Activated T-helper 1 cell treated with anti-CD3 and anti-CD28 coated beads, Interleukin-12 subunit alpha, Interleukin-12 subunit beta, Interleukin-2, Interleukin-4 antibody, amounts not matched to agents 30 ng/mL and 10 ng/mL and 1 ng/mL, durations not matched to agents 14 hours and 24 hours and 36 hours (primary cell): ENCODE measurements at regions of chr6 and their contacts with region 1.

Region 1: GRCh38 chr6:118893807-118894424 is at the start of gene ASF1A:
- DNase-seq: peak; percentile 95
- H3K4me3 Mint-ChIP-seq: peak within 1 kb of the TSS; percentile 94
- H3K27ac Mint-ChIP-seq: peak within 1 kb of the TSS; percentile 96
- H3K4me1 Mint-ChIP-seq: peaks cover 49% of the 10 kb centered on the region
- H3K27me3 Mint-ChIP-seq: no peaks in the 10 kb centered on the region
- total RNA-seq, gene ASF1A: 36.0 and 42.9 TPM in 2 replicates

Region 2: GRCh38 chr6:118283766-118284165 is 610.1 kb before region 1 on chr6:
- intact Hi-C with region 1: loop called (anchors 1 kb)
- DNase-seq: peak; percentile 7
- H3K4me3 Mint-ChIP-seq: no peak overlapping the region
- H3K27ac Mint-ChIP-seq: no peak overlapping the region
- H3K4me1 Mint-ChIP-seq: no peaks in the 10 kb centered on the region
- H3K27me3 Mint-ChIP-seq: peaks cover 18% of the 10 kb centered on the region

Region 3: DNA sequence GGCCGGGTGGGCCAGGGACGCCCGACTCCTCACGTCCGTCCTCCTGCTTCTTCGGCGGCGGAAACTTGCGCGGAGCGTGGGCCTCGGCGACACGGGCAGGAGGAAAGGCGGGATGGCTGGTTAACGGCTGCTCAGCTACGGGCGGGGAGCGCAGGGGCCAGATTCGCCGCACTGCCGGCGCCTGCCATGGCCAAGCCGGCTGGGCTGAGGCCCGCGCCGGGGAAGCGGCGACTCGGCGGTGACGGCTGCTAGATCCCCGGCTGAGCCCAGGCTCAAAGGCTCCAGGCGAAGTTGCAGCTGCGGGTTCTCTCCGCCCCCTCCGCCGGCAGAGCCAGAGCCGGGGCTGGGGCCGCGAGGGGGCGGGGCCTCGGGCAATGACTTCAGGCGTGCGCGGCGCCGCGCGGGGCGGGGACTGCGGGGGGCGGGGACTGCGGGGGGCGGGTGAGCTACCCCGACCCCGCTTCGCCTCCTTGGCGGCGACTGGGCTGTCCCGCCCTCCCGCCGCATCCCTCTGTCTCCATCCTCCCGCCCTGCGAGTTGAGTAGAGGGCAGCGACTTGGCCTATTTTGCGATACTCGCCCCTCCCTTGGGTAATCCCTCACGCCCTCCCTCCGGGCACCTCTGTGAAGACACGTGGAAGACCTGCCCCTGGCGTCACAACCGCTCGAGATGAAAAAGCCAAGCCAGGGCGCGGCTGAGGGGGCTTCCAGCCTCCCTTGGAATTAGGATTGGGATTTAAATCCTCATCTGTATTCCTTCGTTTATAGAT is 242.4 kb before region 1 on chr6 and contains the start of gene CEP85L:
- intact Hi-C with region 1: loop called (anchors 1 kb)
- DNase-seq: peak; percentile 86
- H3K4me3 Mint-ChIP-seq: peak within 1 kb of the TSS; percentile 85
- H3K27ac Mint-ChIP-seq: peak within 1 kb of the TSS; percentile 92
- H3K4me1 Mint-ChIP-seq: peaks cover 52% of the 10 kb centered on the region
- H3K27me3 Mint-ChIP-seq: no peaks in the 10 kb centered on the region
- total RNA-seq, gene CEP85L: 50.9 and 51.4 TPM in 2 replicates

Region 4: GRCh38 chr6:118761645-118762044 is 132.3 kb before region 1 on chr6:
- intact Hi-C with region 1: no loop called
- DNase-seq: no peak
- H3K4me3 Mint-ChIP-seq: no peak overlapping the region
- H3K27ac Mint-ChIP-seq: no peak overlapping the region
- H3K4me1 Mint-ChIP-seq: peaks cover 2% of the 10 kb centered on the region
- H3K27me3 Mint-ChIP-seq: peaks cover 3% of the 10 kb centered on the region

Region 5: DNA sequence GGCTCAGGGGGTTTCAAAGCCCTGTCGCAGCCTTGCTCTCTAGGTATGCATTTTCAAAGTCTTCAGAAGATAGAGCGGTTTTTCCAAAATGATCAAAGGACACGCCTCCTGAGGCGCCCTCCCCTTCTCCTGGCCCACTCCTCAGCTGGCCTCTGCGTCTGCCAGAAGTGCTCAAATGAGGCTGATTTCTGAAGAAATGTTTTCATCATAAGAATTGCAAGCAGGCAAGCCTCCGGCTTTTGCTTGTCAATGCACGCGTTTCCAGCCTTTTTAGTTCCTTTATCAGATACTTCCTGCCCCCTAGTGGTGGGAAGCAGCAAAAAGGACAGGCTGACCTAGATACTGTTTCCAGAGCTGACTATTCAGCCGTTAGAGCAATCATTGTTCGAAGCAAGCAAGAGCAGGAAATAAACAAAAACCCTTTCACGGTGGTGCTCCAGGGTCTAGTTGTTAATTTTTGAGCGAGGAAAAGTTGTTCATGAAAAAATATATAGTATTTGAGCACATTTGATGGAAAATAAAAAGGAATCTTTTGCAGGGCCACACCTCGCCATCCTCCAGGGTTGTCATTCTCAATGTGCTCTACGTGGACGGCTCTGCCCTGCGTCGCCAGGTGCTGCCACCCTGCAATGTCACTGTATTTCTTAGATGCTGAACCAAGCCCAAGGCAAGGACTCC is 93.4 kb before region 1 on chr6:
- intact Hi-C with region 1: loop called (anchors 1 kb)
- DNase-seq: peak; percentile 79
- H3K4me3 Mint-ChIP-seq: peak overlapping the region; percentile 17
- H3K27ac Mint-ChIP-seq: peak overlapping the region; percentile 15
- H3K4me1 Mint-ChIP-seq: peaks cover 35% of the 10 kb centered on the region
- H3K27me3 Mint-ChIP-seq: no peaks in the 10 kb centered on the region

Region 6: DNA sequence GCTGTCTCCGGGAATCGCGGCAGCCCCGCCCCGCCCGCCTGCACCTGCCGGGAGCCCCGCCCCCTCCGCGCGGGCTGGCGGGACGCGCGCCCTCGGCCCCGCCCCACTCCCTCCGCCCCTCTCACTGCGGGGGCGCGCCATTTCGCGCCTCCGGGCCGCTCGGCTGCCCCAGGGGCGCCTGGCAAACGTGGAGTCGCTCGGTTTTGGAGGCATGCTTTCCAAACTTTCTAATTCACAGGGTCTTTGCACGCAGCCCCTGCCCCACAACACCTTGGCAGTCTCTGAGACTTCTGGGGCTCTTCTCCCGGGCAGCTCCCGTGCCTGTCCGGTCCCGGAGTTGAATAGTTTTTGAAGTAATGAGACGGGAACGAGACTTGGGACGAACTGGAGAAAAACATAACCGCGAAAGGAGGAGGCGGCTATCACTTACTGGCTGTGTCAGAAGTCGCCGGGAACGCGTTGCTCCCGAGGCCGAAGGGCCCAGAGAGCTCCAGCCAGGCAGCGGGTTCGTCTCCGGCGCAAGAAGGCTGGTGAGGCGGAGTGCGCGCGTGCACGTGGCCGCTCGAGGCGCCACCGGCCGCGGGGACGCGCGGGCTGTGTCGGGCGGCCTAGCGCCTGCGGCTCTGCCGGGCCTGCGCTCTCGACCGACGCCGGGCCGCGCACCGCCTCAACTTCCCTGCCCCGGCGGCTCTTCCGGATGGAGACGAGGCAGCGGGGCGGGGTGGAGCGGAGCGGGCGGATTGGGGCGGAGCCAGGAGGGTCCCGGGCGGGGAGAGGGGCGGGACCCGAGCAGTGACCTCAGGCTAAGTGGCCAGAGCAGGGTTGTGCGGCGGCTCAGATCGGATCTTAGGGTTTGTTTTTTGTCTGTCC is 40.8 kb after region 1 on chr6 and contains the start of gene MCM9:
- intact Hi-C with region 1: loop called (anchors 1 kb)
- DNase-seq: peak; percentile 86
- H3K4me3 Mint-ChIP-seq: peak within 1 kb of the TSS; percentile 91
- H3K27ac Mint-ChIP-seq: peak within 1 kb of the TSS; percentile 93
- H3K4me1 Mint-ChIP-seq: peaks cover 40% of the 10 kb centered on the region
- H3K27me3 Mint-ChIP-seq: no peaks in the 10 kb centered on the region
- total RNA-seq, gene MCM9: 19.8 and 24.4 TPM in 2 replicates

Region 7: DNA sequence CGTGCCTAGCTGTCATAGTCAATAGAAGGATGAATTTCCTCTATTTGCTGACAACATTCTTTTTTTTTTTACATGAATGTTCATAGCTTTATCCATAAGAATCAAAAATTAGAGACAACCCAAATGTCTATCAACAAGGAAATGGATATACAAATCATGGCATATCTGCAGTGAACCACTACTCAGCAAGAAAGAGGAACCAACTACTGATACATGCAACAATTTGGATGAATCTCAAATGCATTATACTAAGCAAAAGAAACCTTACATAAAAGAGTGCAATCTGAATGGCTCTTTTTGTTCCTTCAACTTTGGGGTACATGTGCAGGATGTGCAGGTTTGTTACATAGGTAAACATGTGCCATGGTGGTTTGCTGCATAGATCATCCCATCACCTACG is 58.8 kb after region 1 on chr6:
- intact Hi-C with region 1: no loop called
- DNase-seq: no peak
- H3K4me3 Mint-ChIP-seq: no peak overlapping the region
- H3K27ac Mint-ChIP-seq: no peak overlapping the region
- H3K4me1 Mint-ChIP-seq: no peaks in the 10 kb centered on the region
- H3K27me3 Mint-ChIP-seq: peaks cover 19% of the 10 kb centered on the region

Region 8: DNA sequence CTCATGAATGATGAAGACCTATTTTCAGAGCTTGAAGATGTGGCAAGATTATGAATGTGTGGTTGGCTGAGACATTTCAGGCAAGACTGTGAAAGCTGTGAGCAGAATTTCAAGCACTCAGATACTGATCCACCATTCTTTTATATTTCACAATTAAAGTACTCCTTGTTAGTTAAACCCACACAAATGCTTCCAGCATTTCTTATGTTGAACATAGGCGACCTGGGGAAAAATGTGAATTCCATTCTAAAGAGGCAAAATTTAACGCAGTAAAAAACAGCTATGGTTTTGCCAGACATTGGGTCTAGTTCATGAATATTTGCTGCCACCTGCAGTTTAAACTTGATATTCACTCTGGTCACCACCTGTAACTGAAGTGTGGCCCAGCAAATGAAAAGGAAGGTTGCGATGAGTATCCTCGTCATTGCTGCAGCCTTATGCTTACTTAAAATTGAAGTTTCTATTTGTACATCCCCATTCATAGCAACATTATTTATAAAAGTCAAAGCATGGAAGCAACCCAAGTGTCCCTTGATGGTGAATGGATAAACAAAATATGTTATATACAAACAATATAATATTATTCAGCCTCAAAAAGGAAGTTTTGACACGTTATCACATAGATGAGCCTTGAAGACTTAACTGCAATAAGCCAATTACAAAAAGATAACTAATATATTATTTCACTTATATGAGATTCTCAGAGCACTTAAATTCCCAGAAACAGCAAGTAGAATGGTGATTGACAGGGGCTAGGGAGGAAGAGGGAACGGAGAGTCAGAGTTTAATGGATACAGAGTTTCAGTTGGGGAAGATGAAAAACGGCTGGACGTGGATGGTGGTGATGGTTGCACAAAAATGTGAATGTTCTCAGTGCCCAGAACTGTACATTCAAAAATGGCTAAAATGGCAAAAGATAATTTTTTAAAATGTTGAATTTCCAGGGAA is 217.0 kb after region 1 on chr6:
- intact Hi-C with region 1: loop called (anchors 1 kb)
- DNase-seq: peak; percentile 31
- H3K4me3 Mint-ChIP-seq: no peak overlapping the region
- H3K27ac Mint-ChIP-seq: no peak overlapping the region
- H3K4me1 Mint-ChIP-seq: peaks cover 17% of the 10 kb centered on the region
- H3K27me3 Mint-ChIP-seq: peaks cover 3% of the 10 kb centered on the region